ENCODE measurements at regions of chr21 and their contacts with region 1.

Region 1: GRCh38 chr21:42424914-42425541 is 21.3 kb downstream of the UBASH3A start:
- DNase-seq: peak; percentile 66 to 94 (median 81)
- ATAC-seq: peak; percentile 80
- H3K4me3 ChIP-seq: peak overlapping the region; percentile 27 to 29
- H3K4me3 Mint-ChIP-seq: peak overlapping the region; percentile 67
- H3K27ac ChIP-seq: peak overlapping the region; percentile 63 to 67
- H3K27ac Mint-ChIP-seq: peak overlapping the region; percentile 91
- H3K4me1 ChIP-seq: peaks cover 65% of the 10 kb centered on the region
- H3K4me1 Mint-ChIP-seq: peaks cover 83% of the 10 kb centered on the region
- H3K27me3 ChIP-seq: peaks cover 0 to 4% of the 10 kb centered on the region in 2 experiments
- H3K27me3 Mint-ChIP-seq: no peaks in the 10 kb centered on the region
- CTCF ChIP-seq: no peak

Region 2: GRCh38 chr21:42135386-42136052 is 289.5 kb before region 1 on chr21:
- CTCF ChIA-PET with region 1: no interaction called
- POLR2A ChIA-PET with region 1: no interaction called
- intact Hi-C with region 1: no loop called
- DNase-seq: no peak
- ATAC-seq: no peak
- H3K4me3 ChIP-seq: no peak overlapping the region
- H3K4me3 Mint-ChIP-seq: no peak overlapping the region
- H3K27ac ChIP-seq: no peak overlapping the region
- H3K27ac Mint-ChIP-seq: no peak overlapping the region
- H3K4me1 ChIP-seq: peaks cover 14% of the 10 kb centered on the region
- H3K4me1 Mint-ChIP-seq: peaks cover 1% of the 10 kb centered on the region
- H3K27me3 ChIP-seq: no peaks in the 10 kb centered on the region
- H3K27me3 Mint-ChIP-seq: no peaks in the 10 kb centered on the region
- CTCF ChIP-seq: no peak

Region 3: GRCh38 chr21:42233067-42233961 is 191.7 kb before region 1 on chr21:
- CTCF ChIA-PET with region 1: no interaction called
- POLR2A ChIA-PET with region 1: no interaction called
- intact Hi-C with region 1: loop called in 1 of 2 experiments (anchors 2 kb)
- DNase-seq: peak; percentile 49 to 95 (median 72)
- ATAC-seq: peak; percentile 57
- H3K4me3 ChIP-seq: peak overlapping the region in 1 of 2 experiments; percentile 1
- H3K4me3 Mint-ChIP-seq: peak overlapping the region; percentile 70
- H3K27ac ChIP-seq: peak overlapping the region; percentile 69 to 93
- H3K27ac Mint-ChIP-seq: peak overlapping the region; percentile 95
- H3K4me1 ChIP-seq: peaks cover 80% of the 10 kb centered on the region
- H3K4me1 Mint-ChIP-seq: peaks cover 94% of the 10 kb centered on the region
- H3K27me3 ChIP-seq: no peaks in the 10 kb centered on the region
- H3K27me3 Mint-ChIP-seq: no peaks in the 10 kb centered on the region
- CTCF ChIP-seq: peak; percentile 50

Region 4: DNA sequence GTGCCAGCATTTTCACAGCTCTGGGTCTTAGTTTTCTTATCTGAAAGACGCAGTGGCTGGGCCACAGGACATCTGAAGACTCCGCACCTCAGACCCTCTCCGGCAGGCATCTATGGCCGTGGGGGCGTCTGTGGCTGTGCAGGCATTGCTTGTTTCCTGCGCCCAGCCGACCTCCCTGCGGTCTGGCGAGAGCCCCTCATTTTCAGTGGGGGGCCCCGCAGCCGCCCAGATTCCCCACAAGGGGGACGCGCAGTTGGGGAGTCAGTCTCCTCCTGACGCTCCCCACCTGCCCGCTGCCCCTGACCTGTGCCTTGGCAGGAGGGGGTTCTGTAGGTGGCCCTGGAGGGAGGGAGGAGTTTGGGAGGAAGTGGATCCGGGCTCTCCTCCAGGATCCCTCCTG is 55.2 kb before region 1 on chr21:
- CTCF ChIA-PET with region 1: interaction called, 3 read pairs
- POLR2A ChIA-PET with region 1: interaction called, 3 read pairs
- intact Hi-C with region 1: loop called in 1 of 2 experiments (anchors 2 kb)
- DNase-seq: peak in 1 of 9 experiments; percentile 20
- ATAC-seq: no peak
- H3K4me3 ChIP-seq: no peak overlapping the region
- H3K4me3 Mint-ChIP-seq: no peak overlapping the region
- H3K27ac ChIP-seq: no peak overlapping the region
- H3K27ac Mint-ChIP-seq: no peak overlapping the region
- H3K4me1 ChIP-seq: no peaks in the 10 kb centered on the region
- H3K4me1 Mint-ChIP-seq: peaks cover 9% of the 10 kb centered on the region
- H3K27me3 ChIP-seq: no peaks in the 10 kb centered on the region
- H3K27me3 Mint-ChIP-seq: no peaks in the 10 kb centered on the region
- CTCF ChIP-seq: no peak

Region 5: DNA sequence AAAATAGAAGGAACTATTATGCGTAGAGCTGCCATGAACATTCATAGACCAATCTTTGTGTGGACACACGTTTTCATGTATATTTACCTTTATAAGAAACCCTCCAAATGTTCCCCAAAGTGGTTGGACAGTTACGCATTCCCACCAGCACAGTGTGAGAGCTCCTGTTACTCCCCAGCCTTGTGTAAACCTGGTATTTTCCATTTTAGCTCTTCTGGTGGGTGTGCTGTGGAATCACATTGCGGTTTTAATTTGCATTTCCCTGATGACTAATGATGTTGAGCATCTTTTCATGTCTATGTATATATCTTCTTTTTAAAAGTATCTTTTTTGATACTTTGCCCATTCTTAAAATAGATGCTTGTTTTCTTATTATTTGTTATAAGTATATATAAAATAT is 24.5 kb before region 1 on chr21:
- CTCF ChIA-PET with region 1: interaction called, 23 read pairs
- POLR2A ChIA-PET with region 1: interaction called, 155 read pairs
- intact Hi-C with region 1: loop called (anchors 1 kb)
- DNase-seq: peak in 1 of 9 experiments; percentile 60
- ATAC-seq: no peak
- H3K4me3 ChIP-seq: no peak overlapping the region
- H3K4me3 Mint-ChIP-seq: no peak overlapping the region
- H3K27ac ChIP-seq: no peak overlapping the region
- H3K27ac Mint-ChIP-seq: no peak overlapping the region
- H3K4me1 ChIP-seq: peaks cover 39% of the 10 kb centered on the region
- H3K4me1 Mint-ChIP-seq: peaks cover 57% of the 10 kb centered on the region
- H3K27me3 ChIP-seq: no peaks in the 10 kb centered on the region
- H3K27me3 Mint-ChIP-seq: no peaks in the 10 kb centered on the region
- CTCF ChIP-seq: no peak

Region 6: DNA sequence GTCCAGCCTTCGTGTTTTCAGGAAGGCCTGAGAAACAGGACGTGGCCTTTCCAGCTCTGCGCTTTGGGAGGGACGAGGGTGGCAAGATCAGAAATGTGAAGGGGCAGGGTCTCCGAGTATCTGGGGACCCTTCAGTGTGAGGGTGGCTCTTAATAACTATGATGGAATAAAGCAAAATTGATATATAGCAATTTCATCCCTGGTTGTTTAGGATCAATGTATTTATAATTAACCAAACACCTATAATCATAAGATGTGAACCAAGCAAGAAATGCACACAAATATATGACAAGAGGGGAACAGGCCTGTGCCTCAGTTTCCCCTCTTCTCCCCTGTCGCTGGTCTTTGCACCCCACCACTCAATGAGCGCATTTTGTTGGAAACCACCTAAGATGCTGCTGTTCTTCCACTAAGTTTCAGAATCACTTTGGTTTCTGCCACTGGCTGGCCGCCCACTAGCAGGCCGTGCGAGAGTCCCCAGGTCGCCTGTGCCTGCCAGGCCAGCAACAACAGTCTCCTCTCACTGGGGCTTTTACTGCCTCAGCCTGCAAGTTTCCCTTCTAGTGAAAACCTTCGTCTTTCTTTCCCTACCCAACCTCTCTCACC is 15.3 kb after region 1 on chr21:
- CTCF ChIA-PET with region 1: interaction called, 4 read pairs
- POLR2A ChIA-PET with region 1: interaction called, 4 read pairs
- intact Hi-C with region 1: loop called in 1 of 2 experiments (anchors 2 kb)
- DNase-seq: peak in 1 of 9 experiments; percentile 31
- ATAC-seq: no peak
- H3K4me3 ChIP-seq: no peak overlapping the region
- H3K4me3 Mint-ChIP-seq: no peak overlapping the region
- H3K27ac ChIP-seq: peak overlapping the region in 1 of 2 experiments; percentile 51
- H3K27ac Mint-ChIP-seq: peak overlapping the region; percentile 84
- H3K4me1 ChIP-seq: peaks cover 26% of the 10 kb centered on the region
- H3K4me1 Mint-ChIP-seq: peaks cover 47% of the 10 kb centered on the region
- H3K27me3 ChIP-seq: peaks cover 0 to 4% of the 10 kb centered on the region in 2 experiments
- H3K27me3 Mint-ChIP-seq: no peaks in the 10 kb centered on the region
- CTCF ChIP-seq: no peak

Region 7: GRCh38 chr21:42711667-42712066 is 286.6 kb after region 1 on chr21:
- CTCF ChIA-PET with region 1: no interaction called
- POLR2A ChIA-PET with region 1: no interaction called
- intact Hi-C with region 1: no loop called
- DNase-seq: no peak
- ATAC-seq: no peak
- H3K4me3 ChIP-seq: no peak overlapping the region
- H3K4me3 Mint-ChIP-seq: no peak overlapping the region
- H3K27ac ChIP-seq: no peak overlapping the region
- H3K27ac Mint-ChIP-seq: peak overlapping the region; percentile 47
- H3K4me1 ChIP-seq: no peaks in the 10 kb centered on the region
- H3K4me1 Mint-ChIP-seq: no peaks in the 10 kb centered on the region
- H3K27me3 ChIP-seq: peaks cover 0 to under 1% of the 10 kb centered on the region in 2 experiments
- H3K27me3 Mint-ChIP-seq: no peaks in the 10 kb centered on the region
- CTCF ChIP-seq: no peak

Measured in CD8-positive, alpha-beta T cell (primary cell).